ENCODE measurements at regions of chr13 and their contacts with region 1.

Region 1: GRCh38 chr13:109778102-109778542 is 8.3 kb downstream of the IRS2 start:
- DNase-seq: no peak
- ATAC-seq: peak in 2 of 8 donors; percentile 28 to 54
- H3K4me3 ChIP-seq: peak overlapping the region in 1 of 10 donors; percentile 10
- H3K27ac ChIP-seq: no peak overlapping the region
- H3K4me1 ChIP-seq: peaks cover 4 to 66% (median 62%) of the 10 kb centered on the region in 9 donors
- H3K27me3 ChIP-seq: no peaks in the 10 kb centered on the region
- CTCF ChIP-seq: no peak

Region 2: GRCh38 chr13:108974686-108975085 is 803.4 kb before region 1 on chr13:
- intact Hi-C with region 1: loop called in 4 of 10 experiments (anchors 5 to 10 kb)
- DNase-seq: no peak
- ATAC-seq: no peak
- H3K4me3 ChIP-seq: no peak overlapping the region
- H3K27ac ChIP-seq: no peak overlapping the region
- H3K4me1 ChIP-seq: no peaks in the 10 kb centered on the region
- H3K27me3 ChIP-seq: peaks cover 0 to 11% (median 0%) of the 10 kb centered on the region in 7 donors
- CTCF ChIP-seq: no peak

Measured in heart right ventricle (tissue), 16 donors.